AG04449 (cell line): ENCODE measurements at regions of chr12 and their contacts with region 1.

Region 1: DNA sequence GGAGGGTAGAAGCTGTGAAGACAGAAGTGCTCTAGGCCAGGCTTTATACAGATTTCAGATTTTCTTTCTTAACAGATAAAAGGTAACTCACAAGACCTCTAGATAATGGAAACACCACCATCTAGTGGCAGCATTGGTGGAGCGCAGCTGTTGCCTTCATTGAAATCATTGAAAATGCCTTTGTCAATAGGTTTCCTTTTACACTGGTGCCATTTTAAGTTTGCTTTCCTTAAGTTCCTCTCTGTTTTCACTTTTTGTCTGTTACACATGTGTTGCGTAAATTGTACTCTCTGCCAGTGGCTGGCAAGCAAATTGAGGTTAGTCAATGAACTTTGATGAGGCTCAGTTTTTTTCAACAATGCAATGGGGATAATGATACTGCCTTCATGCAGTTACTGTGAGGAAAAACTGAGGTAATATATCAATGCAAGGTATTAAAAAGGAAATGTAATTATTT is 31.1 kb downstream of the ALDH1L2 start:
- DNase-seq: peak; percentile 16
- H3K4me3 ChIP-seq: no peak overlapping the region
- CTCF ChIP-seq: peak; percentile 81

Region 2: DNA sequence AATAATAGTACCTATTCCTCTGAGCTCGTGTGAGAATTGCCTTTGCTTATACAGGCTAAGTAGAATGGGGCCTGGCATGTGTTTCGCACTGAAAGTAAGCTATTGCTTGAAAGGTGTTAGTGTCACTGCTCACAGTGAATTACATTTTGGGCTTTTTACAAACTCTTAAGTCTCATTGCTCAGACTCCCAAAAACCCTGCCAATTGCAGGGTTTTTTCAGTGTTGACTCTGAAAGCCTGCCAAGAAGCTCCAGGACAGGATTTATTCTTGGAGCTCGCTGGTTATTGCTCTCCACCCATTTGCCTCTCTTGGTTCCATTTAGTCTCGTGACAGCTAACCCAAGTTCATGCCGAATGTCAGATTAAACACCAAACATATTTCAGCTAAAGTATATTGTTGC is 27.3 kb before region 1 on chr12:
- CTCF ChIA-PET with region 1: interaction called, 28 read pairs
- POLR2A ChIA-PET with region 1: no interaction called
- DNase-seq: peak; percentile 36
- H3K4me3 ChIP-seq: no peak overlapping the region
- CTCF ChIP-seq: no peak

Region 3: DNA sequence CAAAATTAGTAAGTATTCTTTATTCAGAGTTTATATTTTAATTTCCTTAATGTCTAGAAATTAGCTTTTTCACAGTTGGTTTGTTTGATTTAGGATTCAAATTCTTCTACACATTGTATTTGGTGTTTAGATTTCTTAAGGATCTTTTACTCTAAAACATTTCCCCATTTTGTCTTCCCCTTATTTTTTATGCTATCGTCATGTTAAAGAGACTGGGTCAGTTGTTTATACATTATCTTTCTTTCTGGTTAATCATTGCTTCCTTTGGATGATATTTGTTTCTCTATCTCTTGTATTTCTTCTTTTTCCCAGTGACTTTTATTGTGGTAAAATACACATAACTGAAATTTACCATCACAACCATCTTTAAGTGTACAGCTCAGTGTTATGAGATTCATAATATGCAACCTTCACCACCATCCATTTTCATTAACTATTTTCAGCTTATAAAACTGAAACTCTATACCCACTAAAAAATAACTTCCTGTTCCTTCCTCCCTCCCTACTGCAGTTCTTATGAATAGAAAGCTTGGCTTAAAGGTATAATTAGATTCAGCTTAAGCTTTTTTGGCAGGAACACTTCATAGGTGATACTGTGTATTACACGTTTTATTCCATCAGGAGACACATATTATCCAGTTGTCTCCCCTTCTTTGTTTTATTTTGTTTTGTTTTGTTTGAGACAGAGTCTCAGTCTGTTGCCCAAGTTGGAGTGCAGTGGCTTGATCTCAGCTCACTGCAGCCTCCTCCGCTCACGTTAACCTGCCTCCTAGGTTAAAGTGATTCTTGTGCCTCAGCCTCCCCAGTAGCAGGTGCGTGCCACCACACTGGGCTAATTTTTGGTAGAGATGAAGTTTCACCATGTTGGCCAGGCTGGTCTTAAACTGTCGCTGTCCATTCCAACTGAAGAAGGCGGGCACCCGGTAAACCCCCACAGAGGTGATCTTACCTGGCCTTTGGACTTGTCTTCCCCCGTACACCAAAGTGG is 22.0 kb before region 1 on chr12:
- CTCF ChIA-PET with region 1: interaction called, 28 read pairs
- POLR2A ChIA-PET with region 1: no interaction called
- DNase-seq: no peak
- H3K4me3 ChIP-seq: no peak overlapping the region
- CTCF ChIP-seq: no peak

Region 4: DNA sequence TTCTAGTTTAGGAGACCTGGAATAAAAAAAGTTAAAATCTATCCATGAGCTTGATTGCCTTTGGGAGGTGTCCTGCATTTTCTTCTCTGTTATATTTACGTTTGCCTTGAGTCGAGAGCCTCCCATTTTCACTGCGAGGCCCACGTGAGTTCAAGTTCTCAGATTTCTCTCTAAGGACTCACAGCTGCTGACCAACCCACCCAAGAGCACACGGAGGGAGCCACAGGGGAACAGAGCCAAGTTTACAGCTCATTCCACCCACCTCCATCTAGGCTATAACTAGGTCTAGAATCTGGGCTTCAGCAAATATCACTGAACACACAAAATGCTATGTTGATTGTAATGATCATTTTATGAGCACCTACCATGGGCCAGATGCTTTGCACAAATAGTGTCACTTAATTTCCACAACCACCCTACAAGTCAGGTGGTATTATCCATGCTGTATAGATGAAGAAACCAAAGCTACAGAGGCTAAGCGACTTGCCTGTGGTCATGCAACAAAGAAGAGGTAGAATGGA is 14.4 kb after region 1 on chr12:
- CTCF ChIA-PET with region 1: interaction called, 113 read pairs
- POLR2A ChIA-PET with region 1: no interaction called
- DNase-seq: no peak
- H3K4me3 ChIP-seq: no peak overlapping the region
- CTCF ChIP-seq: no peak

Region 5: GRCh38 chr12:105099356-105099755 is 46.2 kb after region 1 on chr12:
- CTCF ChIA-PET with region 1: no interaction called
- POLR2A ChIA-PET with region 1: no interaction called
- DNase-seq: no peak
- H3K4me3 ChIP-seq: no peak overlapping the region
- CTCF ChIP-seq: no peak